ENCODE measurements at regions of chr14 and their contacts with region 1.

Region 1: DNA sequence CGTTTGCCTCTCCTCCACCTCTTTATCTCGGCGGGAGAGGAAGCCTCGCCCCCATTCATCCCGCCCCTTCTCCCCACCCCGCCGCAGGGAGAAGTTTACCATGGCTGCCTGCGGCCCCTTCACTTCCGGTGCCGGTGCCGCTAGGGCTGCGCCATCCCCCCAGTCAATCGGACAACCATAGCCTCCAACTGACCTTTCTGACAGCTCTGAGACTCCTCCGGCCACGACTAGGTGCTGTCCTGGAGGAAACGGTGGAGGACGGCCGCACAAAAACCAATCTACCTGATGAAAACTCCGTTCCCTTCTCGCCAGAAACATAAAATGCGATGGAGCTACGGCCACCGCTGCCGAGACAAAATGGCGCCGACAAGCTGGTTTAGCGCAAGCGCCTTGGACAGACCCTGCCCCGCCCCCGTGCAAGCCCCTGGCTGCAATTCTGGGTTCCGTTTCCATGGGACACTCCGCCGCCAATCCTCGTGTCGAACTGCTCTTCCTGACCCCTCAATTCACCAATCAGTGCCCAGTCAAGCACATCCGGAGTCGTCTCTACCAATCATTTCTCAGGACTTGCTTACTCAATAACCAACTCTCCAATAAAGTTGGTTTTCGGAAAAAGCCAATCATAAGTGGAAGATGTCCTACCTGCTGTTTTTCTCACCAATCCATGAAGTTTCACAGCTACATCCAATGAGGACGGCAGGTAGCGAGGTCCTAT is 436 bp upstream of the ARID4A start:
- DNase-seq: peak; percentile 99
- H3K4me3 Mint-ChIP-seq: no peak overlapping the region
- H3K27ac Mint-ChIP-seq: no peak overlapping the region
- H3K4me1 Mint-ChIP-seq: peaks cover 43% of the 10 kb centered on the region
- H3K27me3 Mint-ChIP-seq: no peaks in the 10 kb centered on the region

Region 2: GRCh38 chr14:58107947-58108552 is 189.9 kb before region 1 on chr14:
- CTCF ChIA-PET with region 1: no interaction called
- intact Hi-C with region 1: loop called (anchors 2 kb)
- DNase-seq: peak; percentile 65
- H3K4me3 Mint-ChIP-seq: no peak overlapping the region
- H3K27ac Mint-ChIP-seq: no peak overlapping the region
- H3K4me1 Mint-ChIP-seq: peaks cover 5% of the 10 kb centered on the region
- H3K27me3 Mint-ChIP-seq: peaks cover 7% of the 10 kb centered on the region

Region 3: GRCh38 chr14:58239244-58240195 is 58.4 kb before region 1 on chr14:
- CTCF ChIA-PET with region 1: no interaction called
- intact Hi-C with region 1: loop called (anchors 1 kb)
- DNase-seq: peak; percentile 88
- H3K4me3 Mint-ChIP-seq: no peak overlapping the region
- H3K27ac Mint-ChIP-seq: no peak overlapping the region
- H3K4me1 Mint-ChIP-seq: peaks cover 22% of the 10 kb centered on the region
- H3K27me3 Mint-ChIP-seq: no peaks in the 10 kb centered on the region

Region 4: GRCh38 chr14:58280954-58281787 is 16.7 kb before region 1 on chr14:
- CTCF ChIA-PET with region 1: interaction called, 5 read pairs
- intact Hi-C with region 1: loop called (anchors 1 kb)
- DNase-seq: peak; percentile 66
- H3K4me3 Mint-ChIP-seq: peak overlapping the region; percentile 70
- H3K27ac Mint-ChIP-seq: peak overlapping the region; percentile 99
- H3K4me1 Mint-ChIP-seq: peaks cover 68% of the 10 kb centered on the region
- H3K27me3 Mint-ChIP-seq: no peaks in the 10 kb centered on the region

Region 5: GRCh38 chr14:58331111-58331510 is 33.2 kb after region 1 on chr14:
- CTCF ChIA-PET with region 1: no interaction called
- intact Hi-C with region 1: loop called (anchors 1 kb)
- DNase-seq: peak; percentile 95
- H3K4me3 Mint-ChIP-seq: peak overlapping the region; percentile 73
- H3K27ac Mint-ChIP-seq: peak overlapping the region; percentile 83
- H3K4me1 Mint-ChIP-seq: peaks cover 20% of the 10 kb centered on the region
- H3K27me3 Mint-ChIP-seq: no peaks in the 10 kb centered on the region

Region 6: DNA sequence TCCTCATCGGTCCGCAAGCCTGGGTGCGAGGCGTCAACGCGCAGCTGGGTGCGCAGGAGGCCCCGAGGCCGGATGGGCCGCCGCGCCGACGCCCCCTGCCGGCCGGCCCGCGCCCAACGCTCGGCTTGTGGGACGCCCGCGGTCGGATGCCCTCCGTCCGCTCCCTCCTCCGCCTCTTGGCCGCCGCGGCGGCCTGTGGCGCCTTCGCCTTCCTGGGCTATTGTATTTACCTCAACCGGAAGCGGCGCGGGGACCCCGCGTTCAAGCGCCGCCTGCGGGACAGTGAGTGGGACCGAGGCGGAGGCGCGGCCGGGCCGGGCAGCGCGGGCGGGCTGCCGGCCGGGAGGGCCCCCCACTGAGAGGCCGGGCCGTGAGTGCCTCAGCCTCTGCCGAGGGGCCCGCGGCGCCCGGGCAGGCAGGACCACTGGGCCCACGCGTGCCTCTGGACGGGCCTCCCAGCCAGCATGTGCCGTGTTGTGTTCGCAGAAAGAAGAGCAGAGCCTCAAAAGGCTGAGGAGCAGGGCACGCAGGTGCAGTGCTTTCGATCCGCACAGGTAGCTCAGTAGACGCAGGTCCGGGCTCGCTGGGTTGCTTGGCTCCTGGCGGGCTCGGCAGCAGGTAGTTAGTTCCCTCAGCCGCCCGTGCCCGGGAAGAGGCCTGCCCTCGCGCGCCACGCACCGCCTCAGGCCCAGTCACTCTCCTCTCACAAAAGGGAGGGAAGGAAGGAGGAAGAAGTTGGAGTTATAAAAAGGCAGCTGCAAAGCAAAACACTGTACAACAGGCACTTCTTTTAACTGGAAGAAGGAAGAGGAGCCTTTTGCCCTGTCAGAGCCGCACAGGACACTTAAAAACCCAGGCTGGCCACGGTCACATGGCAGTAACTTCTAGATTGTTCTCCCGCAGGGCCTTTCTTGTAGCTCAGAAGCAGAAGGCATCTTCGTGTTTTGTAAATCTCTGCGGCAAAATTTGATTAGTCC is 98.2 kb after region 1 on chr14 and contains the start of gene TOMM20L:
- CTCF ChIA-PET with region 1: interaction called, 12 read pairs
- intact Hi-C with region 1: no loop called
- DNase-seq: peak; percentile 71
- H3K4me3 Mint-ChIP-seq: peak within 1 kb of the TSS; percentile 67
- H3K27ac Mint-ChIP-seq: no peak within 1 kb of the TSS
- H3K4me1 Mint-ChIP-seq: peaks cover 8% of the 10 kb centered on the region
- H3K27me3 Mint-ChIP-seq: no peaks in the 10 kb centered on the region
- total RNA-seq, gene TOMM20L: not detected

Region 7: DNA sequence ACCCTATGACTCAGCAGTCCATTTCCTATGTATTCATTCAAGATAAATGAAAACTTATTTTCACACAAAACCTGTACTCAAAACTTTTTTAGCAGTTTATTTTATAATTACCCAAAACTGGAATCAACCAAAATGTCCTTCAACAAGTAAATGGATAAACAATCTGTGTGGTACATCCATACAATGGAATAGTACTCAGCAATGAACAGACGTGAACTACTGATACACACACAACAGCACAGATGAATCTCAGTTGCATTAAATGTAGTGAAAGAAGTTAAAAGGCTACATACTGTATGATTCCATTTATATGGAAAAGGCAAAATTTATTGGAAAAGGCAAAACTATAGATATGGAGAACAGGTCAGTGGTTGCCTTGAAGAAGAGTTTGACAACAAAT is 219.7 kb after region 1 on chr14:
- CTCF ChIA-PET with region 1: no interaction called
- intact Hi-C with region 1: no loop called
- DNase-seq: no peak
- H3K4me3 Mint-ChIP-seq: no peak overlapping the region
- H3K27ac Mint-ChIP-seq: no peak overlapping the region
- H3K4me1 Mint-ChIP-seq: no peaks in the 10 kb centered on the region
- H3K27me3 Mint-ChIP-seq: no peaks in the 10 kb centered on the region

Region 8: DNA sequence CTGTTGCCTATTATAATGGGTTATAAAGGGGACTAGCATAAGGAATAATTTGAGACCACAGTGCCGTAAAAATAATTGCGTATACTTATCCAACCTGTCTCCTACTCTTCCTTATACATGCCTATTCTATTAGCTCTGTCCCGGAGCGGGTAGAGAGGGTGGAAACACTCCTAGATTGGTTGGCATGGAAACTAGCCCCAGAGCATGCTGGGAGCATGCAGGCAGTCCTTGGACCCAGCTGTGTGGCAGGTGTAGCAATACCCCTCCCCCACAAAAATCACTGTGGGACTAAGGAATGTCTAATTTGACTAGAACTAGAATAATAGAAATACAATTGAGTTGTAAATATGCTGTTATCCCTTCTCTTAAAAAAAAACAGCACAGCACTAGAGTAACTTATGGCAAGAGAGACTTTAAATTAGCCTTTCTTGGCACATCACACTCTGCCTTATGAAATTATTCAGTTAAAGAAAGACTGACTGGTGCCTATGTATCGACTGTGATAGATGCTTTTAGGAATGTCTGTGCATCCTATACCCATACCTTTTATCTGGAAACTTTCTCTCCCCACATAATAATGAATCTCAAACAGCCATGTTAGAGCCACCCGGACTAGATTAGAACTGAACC is 646.5 kb after region 1 on chr14:
- CTCF ChIA-PET with region 1: no interaction called
- intact Hi-C with region 1: no loop called
- DNase-seq: no peak
- H3K4me3 Mint-ChIP-seq: no peak overlapping the region
- H3K27ac Mint-ChIP-seq: no peak overlapping the region
- H3K4me1 Mint-ChIP-seq: no peaks in the 10 kb centered on the region
- H3K27me3 Mint-ChIP-seq: peaks cover 12% of the 10 kb centered on the region